ENCODE measurements at regions of chr17 and their contacts with region 1.

Region 1: GRCh38 chr17:67855504-67856324 is 30.4 kb downstream of the BPTF start:
- DNase-seq: no peak
- ATAC-seq: peak in 1 of 4 donors; percentile 43
- H3K4me3 ChIP-seq: peak overlapping the region in 1 of 12 donors; percentile 21
- H3K27ac ChIP-seq: peak overlapping the region in 1 of 12 donors; percentile 28
- H3K4me1 ChIP-seq: peaks cover 3 to 78% (median 48%) of the 10 kb centered on the region in 12 donors
- H3K27me3 ChIP-seq: no peaks in the 10 kb centered on the region
- CTCF ChIP-seq: no peak
- POLR2A ChIP-seq: no peak

Region 2: GRCh38 chr17:68210570-68211315 is 355.0 kb after region 1 on chr17:
- intact Hi-C with region 1: loop called in 1 of 10 experiments (anchors 10 kb)
- DNase-seq: no peak
- ATAC-seq: no peak
- H3K4me3 ChIP-seq: no peak overlapping the region
- H3K27ac ChIP-seq: no peak overlapping the region
- H3K4me1 ChIP-seq: peaks cover 0 to 13% (median 5%) of the 10 kb centered on the region in 12 donors
- H3K27me3 ChIP-seq: no peaks in the 10 kb centered on the region
- CTCF ChIP-seq: no peak
- POLR2A ChIP-seq: no peak

Measured in heart left ventricle (tissue), 16 donors.